ENCODE measurements at regions of chr2 and their contacts with region 1.

Region 1: GRCh38 chr2:231545105-231545902 is 15.1 kb upstream of the NMUR1 start:
- DNase-seq: peak; percentile 90
- H3K4me3 Mint-ChIP-seq: peak overlapping the region; percentile 56
- H3K27ac Mint-ChIP-seq: peak overlapping the region; percentile 99
- H3K4me1 Mint-ChIP-seq: peaks cover 69% of the 10 kb centered on the region
- H3K27me3 Mint-ChIP-seq: peaks cover 10% of the 10 kb centered on the region

Region 2: DNA sequence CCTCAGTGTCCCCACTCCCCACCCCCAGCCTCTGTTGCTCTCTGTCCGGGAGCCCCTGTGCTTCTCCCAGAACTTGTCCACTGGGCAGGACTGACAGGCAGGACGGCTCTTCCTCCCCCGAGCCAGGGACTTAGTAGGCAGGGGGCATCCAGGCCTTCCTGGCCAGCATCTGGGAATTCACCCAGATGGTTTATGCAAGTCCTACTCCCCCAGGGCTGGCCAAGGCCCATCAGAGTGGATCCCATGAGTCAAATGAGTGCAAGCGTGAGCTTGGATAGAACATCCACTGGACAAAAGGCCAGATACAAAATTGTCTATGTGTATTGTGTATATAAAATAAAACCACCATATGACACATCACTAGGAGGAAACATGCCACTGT is 22.5 kb before region 1 on chr2:
- CTCF ChIA-PET with region 1: interaction called, 11 read pairs
- POLR2A ChIA-PET with region 1: interaction called, 15 read pairs
- DNase-seq: no peak
- H3K4me3 Mint-ChIP-seq: no peak overlapping the region
- H3K27ac Mint-ChIP-seq: no peak overlapping the region
- H3K4me1 Mint-ChIP-seq: peaks cover 57% of the 10 kb centered on the region
- H3K27me3 Mint-ChIP-seq: peaks cover 23% of the 10 kb centered on the region